ENCODE measurements at regions of chr11 and their contacts with region 1.

Region 1: GRCh38 chr11:65569973-65570918 is at the start of gene ZNRD2:
- DNase-seq: peak; percentile 99
- H3K4me3 Mint-ChIP-seq: peak within 1 kb of the TSS; percentile 100
- H3K27ac Mint-ChIP-seq: peak within 1 kb of the TSS; percentile 99
- H3K4me1 Mint-ChIP-seq: peaks cover 71% of the 10 kb centered on the region
- H3K27me3 Mint-ChIP-seq: no peaks in the 10 kb centered on the region
- total RNA-seq, gene ZNRD2: 25.3 to 27.8 TPM

Region 2: DNA sequence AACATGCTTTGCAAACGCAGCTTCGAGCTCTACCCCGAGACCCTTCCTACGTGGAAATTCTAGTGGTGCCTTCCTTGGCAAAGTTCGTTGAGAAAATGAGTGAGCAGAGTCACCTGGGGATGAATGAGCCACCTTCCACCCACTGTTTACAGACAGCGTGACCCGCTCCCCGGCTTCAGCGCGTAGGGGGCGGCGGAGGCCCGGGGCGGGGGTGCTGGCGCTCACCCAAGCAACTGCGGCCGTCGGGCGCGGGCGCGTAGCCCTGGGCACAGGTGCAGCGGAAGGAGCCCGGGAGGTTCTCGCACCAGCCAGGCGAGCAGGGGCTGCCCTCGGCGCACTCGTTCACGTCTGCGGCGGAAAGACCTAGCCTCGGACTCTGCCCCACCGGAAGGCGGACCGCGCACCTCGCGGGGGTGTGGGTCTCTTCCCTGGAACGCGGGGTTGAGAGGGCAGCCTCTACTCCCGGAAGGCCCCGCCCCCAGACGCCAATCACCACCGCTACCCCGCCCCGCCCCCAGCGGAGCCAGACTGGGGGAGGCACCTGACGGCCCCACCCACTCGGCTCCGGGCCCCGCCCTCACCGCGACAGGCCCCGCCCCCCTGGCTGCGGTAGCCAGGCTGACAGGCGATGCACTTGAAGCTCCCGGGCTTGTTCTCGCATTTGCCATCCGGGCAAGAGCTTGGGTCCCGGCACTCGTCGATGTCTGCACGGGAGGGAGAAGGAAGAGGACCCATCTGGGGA is 23.9 kb before region 1 on chr11:
- CTCF ChIA-PET with region 1: interaction called, 88 read pairs
- POLR2A ChIA-PET with region 1: interaction called, 54 read pairs
- DNase-seq: peak; percentile 98
- H3K4me3 Mint-ChIP-seq: peak overlapping the region; percentile 73
- H3K27ac Mint-ChIP-seq: peak overlapping the region; percentile 82
- H3K4me1 Mint-ChIP-seq: peaks cover 51% of the 10 kb centered on the region
- H3K27me3 Mint-ChIP-seq: no peaks in the 10 kb centered on the region

Region 3: DNA sequence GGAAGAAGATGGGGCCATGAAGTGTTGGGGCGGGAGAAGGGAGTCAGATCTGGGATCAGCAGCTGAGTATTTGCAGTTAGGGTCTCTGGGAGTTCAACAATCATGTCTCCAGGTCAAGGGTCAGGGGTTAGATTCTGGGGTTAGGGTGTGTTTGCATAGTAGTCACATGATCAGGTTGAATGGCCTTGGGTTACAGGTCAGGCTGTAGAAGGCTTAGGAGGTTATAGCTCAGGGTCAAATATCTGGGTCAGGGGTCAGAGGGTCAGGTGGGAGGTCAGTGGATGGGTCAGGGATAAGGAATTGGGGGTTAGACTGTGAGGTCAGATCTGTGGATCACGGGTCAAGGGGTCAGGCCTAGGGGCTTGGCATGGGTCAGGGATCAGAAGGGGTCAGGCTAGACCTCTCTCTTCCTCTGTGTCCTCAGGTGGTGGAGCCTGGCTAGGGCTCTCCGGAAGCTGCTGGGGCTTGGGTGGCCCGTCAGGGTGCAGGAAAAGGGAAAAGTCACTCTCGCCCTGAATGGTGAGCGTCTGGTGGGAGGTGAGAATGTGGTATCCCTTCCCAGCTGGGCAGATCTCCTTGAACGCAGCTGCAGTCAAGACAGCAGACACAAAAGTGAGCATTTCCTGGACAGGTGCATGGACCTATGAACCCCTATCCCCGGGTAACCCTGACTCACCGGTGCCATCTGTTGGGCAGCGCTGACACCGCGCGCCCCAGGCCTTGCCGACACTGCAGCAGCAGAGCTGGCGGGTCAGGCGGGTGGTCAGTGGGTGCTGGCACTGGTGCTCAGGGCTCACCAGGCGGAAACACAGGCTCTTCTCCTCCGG is 18.5 kb before region 1 on chr11:
- CTCF ChIA-PET with region 1: interaction called, 25 read pairs
- POLR2A ChIA-PET with region 1: interaction called, 21 read pairs
- DNase-seq: peak; percentile 73
- H3K4me3 Mint-ChIP-seq: no peak overlapping the region
- H3K27ac Mint-ChIP-seq: peak overlapping the region; percentile 31
- H3K4me1 Mint-ChIP-seq: peaks cover 70% of the 10 kb centered on the region
- H3K27me3 Mint-ChIP-seq: no peaks in the 10 kb centered on the region

Region 4: DNA sequence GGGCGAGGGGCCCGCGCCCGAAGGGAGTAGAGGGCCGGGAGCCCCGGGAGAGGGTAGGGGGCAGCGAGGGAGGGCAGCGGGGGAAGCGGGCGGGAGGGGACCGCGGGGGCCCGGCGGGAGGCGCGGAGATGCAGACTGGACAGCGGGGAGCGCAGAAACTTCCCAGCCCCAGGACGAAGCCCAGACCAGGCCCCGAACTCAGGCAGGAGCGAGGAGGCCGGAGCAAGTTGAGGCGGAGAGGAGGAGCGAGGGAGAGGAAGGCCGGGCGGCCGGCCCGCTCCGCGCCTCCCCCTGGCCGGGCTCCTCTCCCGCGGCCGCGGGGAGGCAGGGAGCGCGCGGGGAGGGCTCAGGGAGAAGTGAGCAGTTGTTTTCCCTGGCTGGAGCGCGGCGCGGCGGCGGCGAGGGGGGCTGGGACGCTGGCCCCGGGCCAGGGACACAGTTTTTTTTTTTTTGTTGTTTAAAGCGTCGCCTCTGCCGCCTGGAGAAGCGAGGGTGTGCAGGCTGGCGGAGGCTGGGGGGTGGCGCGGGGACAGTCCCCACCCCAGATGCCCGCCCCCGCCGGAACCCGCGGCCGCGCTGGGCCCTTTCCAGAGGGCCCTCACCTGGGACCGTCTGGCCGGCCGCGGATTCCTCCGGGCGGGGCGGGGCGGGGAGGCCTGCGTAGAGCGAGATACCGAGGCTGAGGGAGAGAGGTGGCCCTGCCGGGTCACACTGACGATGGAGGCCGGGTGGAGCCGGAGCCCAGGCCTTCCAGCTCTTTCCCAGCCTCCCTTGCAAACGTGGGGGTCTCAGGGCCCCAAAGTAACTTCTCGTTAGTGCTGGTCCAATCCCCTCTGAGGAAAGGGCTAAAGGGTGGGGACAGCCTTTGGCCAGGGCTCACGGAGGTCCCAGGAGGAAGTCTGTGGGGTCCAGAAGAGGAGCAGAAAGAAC is 12.0 kb before region 1 on chr11 and contains the start of gene LTBP3:
- CTCF ChIA-PET with region 1: interaction called, 25 read pairs
- POLR2A ChIA-PET with region 1: interaction called, 31 read pairs
- DNase-seq: no peak
- H3K4me3 Mint-ChIP-seq: peak within 1 kb of the TSS; percentile 74
- H3K27ac Mint-ChIP-seq: peak within 1 kb of the TSS; percentile 74
- H3K4me1 Mint-ChIP-seq: peaks cover 56% of the 10 kb centered on the region
- H3K27me3 Mint-ChIP-seq: no peaks in the 10 kb centered on the region
- total RNA-seq, gene LTBP3: 55.4 to 60.0 TPM

Region 5: DNA sequence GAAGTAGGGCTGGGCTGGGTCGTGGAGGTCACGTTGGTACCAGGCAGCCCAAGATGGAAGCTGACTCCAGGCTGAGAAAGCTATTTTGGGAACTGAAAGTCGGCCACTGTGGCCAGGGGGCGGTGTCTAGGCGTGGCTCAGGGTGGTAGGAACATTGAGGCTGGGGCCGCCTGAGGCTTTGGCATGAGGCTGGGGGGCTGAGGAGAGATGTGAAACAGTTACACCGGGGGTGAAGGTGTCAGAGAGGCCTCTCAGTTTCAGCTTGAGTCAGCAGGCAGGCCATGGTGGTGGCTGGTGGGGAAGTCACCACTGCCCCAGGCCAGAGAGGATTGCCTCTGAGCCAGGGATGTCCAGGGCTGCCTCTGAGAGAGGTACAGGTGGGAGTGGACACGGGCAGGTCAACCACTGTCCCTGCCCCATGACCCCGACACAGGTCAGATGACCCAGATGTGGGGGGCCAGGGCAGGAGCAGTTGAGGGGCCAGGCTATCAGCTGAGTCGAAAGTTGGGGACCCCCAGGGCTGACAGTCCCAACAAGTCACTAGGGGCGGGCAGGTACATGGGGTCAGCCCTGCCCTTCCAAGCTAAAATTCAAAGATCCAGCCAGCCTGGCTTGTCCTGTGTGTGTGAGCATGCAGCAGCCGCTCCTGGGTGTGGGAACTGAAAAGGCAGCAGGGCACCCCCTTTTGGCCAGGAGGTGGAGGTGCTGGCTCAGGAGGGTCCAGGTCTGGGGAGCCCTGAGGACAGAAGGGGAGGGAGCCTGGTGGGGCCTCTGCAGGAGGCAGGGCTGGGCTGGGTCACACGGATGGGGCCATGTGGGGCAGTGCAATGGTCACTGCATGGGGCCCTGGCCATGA is 18.2 kb after region 1 on chr11:
- CTCF ChIA-PET with region 1: interaction called, 60 read pairs
- POLR2A ChIA-PET with region 1: interaction called, 96 read pairs
- DNase-seq: peak; percentile 83
- H3K4me3 Mint-ChIP-seq: peak overlapping the region; percentile 44
- H3K27ac Mint-ChIP-seq: peak overlapping the region; percentile 95
- H3K4me1 Mint-ChIP-seq: peaks cover 43% of the 10 kb centered on the region
- H3K27me3 Mint-ChIP-seq: no peaks in the 10 kb centered on the region

Region 6: GRCh38 chr11:65833297-65834030 is 263.2 kb after region 1 on chr11 and contains the start of gene SNX32:
- CTCF ChIA-PET with region 1: no interaction called
- POLR2A ChIA-PET with region 1: no interaction called
- DNase-seq: peak; percentile 96
- H3K4me3 Mint-ChIP-seq: no peak within 1 kb of the TSS
- H3K27ac Mint-ChIP-seq: peak within 1 kb of the TSS; percentile 29
- H3K4me1 Mint-ChIP-seq: peaks cover 19% of the 10 kb centered on the region
- H3K27me3 Mint-ChIP-seq: peaks cover 26% of the 10 kb centered on the region
- total RNA-seq, gene SNX32: 0.83 to 1.6 TPM